Posterior cingulate gyrus (tissue), 11 donors: ENCODE measurements at regions of chr13 and their contacts with region 1.

Region 1: DNA sequence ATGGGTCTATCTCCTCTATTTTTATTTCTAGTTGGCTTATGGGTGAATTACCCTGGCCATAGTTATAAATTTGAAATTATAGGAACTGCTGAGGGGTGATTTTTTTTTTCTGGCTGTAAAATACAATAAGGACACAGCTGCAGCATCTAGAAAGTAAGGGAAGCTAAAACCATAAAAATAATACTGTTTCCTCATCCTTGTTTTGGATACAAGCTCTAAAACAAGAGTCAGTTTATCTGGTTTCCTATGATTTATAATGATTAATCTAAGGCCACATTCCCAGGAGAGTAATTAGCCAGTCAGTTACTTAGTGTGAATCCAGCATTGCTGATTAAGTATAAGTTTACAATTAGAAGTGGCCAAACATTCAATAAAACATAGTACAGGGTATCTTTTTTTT is 219.1 kb upstream of the NBEA start:
- DNase-seq: no peak

Region 2: DNA sequence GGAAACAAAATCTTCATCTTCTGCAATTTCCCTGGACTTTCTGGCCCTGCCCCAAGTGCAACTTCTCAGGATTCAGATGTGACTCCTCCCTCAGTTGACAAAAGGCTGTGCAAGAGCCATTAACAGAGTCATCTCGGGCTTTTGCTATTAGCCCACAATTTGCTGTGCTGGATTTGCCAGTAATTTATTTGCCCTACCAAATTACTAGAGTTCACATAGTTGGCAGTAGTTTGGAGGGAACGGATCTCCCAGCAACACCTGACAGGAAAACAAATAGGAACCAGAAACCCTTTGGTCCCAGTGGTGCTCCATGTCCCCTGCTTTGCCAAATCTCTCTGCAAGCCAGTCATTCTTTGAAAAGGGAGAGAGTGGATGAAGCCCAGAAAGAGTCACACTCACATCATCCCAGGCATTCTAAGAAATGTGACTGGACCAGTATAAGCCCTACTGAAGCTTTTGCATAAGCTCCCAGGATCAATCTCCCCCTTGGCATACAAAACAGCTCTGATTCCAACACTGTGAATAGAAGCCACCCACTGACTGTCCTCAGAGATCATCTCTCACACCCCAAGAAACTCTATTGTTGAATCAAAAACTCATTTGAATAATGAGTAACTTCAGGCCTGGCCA is 130.9 kb before region 1 on chr13:
- intact Hi-C with region 1: loop called (anchors 10 kb)
- DNase-seq: no peak